ENCODE measurements at regions of chr21 and their contacts with region 1.

Region 1: GRCh38 chr21:30444204-30444603 is 4.1 kb downstream of the KRTAP15-1 start:
- DNase-seq: no peak
- ATAC-seq: peak; percentile 78

Region 2: DNA sequence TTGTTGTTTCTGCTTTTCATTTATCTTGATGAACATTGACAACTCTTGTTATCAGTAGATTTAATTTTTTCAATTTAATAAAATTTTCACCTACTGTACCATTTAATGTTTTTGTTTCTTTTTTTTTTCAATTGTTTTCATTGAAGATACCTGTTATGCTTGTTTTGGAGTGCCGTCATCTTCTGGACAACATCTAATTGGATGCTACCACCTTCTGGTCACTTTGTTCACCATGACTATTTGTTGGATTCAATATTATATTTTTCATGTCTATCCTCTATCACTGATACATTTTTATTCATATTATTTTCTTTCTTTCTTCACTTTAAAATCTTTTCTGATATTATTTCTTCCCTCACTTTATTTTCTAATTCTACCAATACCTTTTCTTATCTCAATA is 288.8 kb after region 1 on chr21:
- intact Hi-C with region 1: loop called (anchors 2 kb)
- DNase-seq: no peak
- ATAC-seq: no peak

Measured in left ventricle myocardium superior (tissue), 1 donor.